HCT116 (cell line): ENCODE measurements at regions of chr2 and their contacts with region 1.

Region 1: DNA sequence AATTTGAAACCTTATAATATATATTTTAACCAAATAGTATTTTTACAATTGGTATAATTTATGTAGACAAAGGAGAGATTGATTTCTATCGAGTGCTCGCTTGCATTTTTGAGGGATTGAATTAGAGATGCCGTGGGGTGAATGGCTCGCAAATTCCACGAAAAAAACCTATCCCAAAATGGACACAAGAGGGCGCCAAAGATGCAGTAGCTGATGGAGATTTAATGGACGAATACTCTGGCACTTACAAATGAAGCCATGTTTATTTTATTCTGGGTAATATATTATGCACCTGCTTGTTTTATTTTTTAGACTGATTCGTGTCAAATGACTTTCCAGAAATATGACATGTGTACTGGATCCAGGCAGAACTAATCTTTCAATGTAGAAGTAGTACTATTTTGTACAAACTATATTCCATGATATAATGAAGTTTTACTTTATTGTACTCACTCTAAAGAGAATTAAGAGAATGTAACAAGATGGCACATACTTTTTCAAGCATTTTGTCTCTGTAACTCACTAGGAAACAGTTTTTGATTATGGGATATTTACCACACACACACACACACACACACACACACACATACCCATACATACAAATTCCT is 505.4 kb downstream of the PLCL1 start:
- DNase-seq: peak; percentile 37
- ATAC-seq: peak; percentile 73
- H3K4me3 ChIP-seq: no peak overlapping the region
- H3K27ac ChIP-seq: no peak overlapping the region
- H3K4me1 ChIP-seq: no peaks in the 10 kb centered on the region
- H3K27me3 ChIP-seq: peaks cover 25% of the 10 kb centered on the region; the same call in 1 of the 2 replicates
- CTCF ChIP-seq: peak; percentile 56 to 81 (median 78)
- POLR2A ChIP-seq: no peak
- RAD21 ChIP-seq: peak; percentile 68

Region 2: GRCh38 chr2:199488772-199489400 is 1179.1 kb after region 1 on chr2:
- CTCF ChIA-PET with region 1: interaction called, 39 read pairs
- POLR2A ChIA-PET with region 1: no interaction called
- RAD21 ChIA-PET with region 1: interaction called, 3 to 4 read pairs
- intact Hi-C with region 1: loop called (anchors 2 kb)
- DNase-seq: peak; percentile 60
- ATAC-seq: peak; percentile 72
- H3K4me3 ChIP-seq: no peak overlapping the region
- H3K27ac ChIP-seq: no peak overlapping the region
- H3K4me1 ChIP-seq: no peaks in the 10 kb centered on the region; a peak in 1 of 4 replicates
- H3K27me3 ChIP-seq: no peaks in the 10 kb centered on the region
- CTCF ChIP-seq: peak; percentile 68 to 89 (median 89); a peak in 5 of 6 replicates
- POLR2A ChIP-seq: no peak
- RAD21 ChIP-seq: peak; percentile 71

Region 3: DNA sequence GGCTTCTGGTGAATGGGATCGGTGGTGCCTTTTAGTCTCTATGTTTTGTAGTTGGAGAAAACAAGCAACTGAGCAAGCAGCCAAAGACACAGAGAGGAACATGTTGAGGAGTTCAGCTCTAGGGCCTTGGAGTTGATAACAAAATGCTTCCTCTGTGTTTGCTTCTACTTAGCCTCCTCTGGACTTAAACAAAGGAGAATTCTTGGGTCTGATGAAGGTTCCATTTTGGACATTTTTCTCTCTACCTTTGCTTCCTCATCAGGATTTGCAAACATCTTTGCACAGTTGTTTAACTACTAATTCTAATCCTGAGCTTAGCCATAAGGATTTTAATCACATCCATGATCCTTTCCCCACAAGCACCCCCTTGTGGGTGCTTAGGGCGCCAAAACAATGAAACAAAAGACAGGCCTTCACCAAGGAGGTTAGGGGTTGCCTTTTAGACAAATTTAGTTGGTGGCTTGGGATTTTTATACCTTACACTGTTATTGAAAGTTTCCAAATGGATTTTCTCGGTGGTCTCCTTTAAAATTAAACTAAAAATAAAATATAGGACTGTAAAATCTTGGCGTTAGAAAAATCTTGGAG is 1296.5 kb after region 1 on chr2:
- CTCF ChIA-PET with region 1: interaction called, 15 read pairs
- POLR2A ChIA-PET with region 1: no interaction called
- RAD21 ChIA-PET with region 1: no interaction called
- intact Hi-C with region 1: no loop called
- DNase-seq: no peak
- ATAC-seq: peak; percentile 49; the same call in 1 of the 2 replicates
- H3K4me3 ChIP-seq: no peak overlapping the region
- H3K27ac ChIP-seq: no peak overlapping the region
- H3K4me1 ChIP-seq: peaks cover 3 to 6% of the 10 kb centered on the region in 2 experiments; a peak in 3 of 4 replicates
- H3K27me3 ChIP-seq: no peaks in the 10 kb centered on the region
- CTCF ChIP-seq: peak; percentile 17 to 54 (median 49); a peak in 4 of 6 replicates
- POLR2A ChIP-seq: no peak
- RAD21 ChIP-seq: peak; percentile 25; the same call in 1 of the 2 replicates

Region 4: DNA sequence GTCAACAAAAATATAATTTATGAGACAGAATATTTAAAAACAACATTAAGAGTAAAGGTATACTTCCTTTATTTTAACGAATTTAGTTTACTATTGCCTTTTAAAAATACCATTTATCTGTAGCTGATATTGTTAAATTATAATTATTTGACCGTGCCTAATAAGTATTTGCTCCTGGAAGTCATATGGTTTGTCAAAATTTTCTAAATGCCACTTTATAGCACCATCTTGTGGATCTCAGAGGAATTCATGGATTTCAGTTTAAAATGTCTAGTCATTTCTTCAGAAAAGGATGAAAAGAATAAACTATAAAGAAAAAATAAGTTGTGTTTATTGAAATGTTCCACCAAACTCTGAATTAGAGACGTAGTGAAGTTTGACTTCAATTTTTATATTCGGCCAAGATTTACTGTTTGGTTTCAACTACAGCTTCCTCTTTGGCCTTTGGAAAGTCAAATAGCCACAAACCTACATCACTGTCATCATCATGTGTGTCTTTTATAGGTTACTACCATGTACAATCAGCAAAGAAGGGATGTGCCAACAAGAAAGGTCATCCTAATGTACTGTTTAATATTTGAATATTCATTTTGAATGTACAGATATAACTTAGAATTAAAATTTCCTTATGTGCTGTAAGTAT is 1551.5 kb after region 1 on chr2:
- CTCF ChIA-PET with region 1: no interaction called
- POLR2A ChIA-PET with region 1: no interaction called
- RAD21 ChIA-PET with region 1: no interaction called
- intact Hi-C with region 1: loop called (anchors 10 kb)
- DNase-seq: peak; percentile 19
- ATAC-seq: peak; percentile 61
- H3K4me3 ChIP-seq: no peak overlapping the region
- H3K27ac ChIP-seq: no peak overlapping the region
- H3K4me1 ChIP-seq: no peaks in the 10 kb centered on the region
- H3K27me3 ChIP-seq: no peaks in the 10 kb centered on the region
- CTCF ChIP-seq: peak; percentile 54 to 70 (median 67); a peak in 5 of 6 replicates
- POLR2A ChIP-seq: no peak
- RAD21 ChIP-seq: peak; percentile 76